Thyroid gland (tissue), 4 donors: ENCODE measurements at regions of chr18 and their contacts with region 1.

Region 1: DNA sequence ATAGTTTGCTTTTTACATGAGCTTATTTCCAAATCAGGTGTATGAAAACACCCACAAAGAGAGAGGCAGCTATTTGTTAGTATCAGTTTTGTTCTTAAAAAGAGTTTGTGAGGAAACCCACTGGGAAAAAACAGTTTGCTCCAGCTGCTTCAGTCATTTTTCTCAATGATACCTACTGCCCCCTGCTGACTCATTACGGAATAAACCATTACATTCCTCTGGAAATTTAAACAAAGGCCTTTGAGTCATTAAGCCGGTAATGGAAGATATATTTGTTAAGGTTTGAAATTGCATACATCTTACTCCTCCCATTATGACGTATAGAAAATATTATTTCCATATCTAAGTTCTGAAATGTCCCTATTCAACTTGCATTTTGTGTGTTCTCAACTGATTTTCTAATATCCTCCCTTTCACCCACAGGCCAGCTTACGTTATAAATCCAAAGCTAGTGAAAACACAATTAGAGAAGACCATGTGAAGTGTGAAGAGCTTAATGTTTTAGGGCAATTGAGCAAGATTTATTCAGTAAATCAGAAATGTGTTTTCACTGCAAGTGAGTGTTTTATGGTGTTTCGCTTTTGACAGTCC is 761.6 kb downstream of the DSC3 start:
- DNase-seq: no peak
- H3K4me3 ChIP-seq: no peak overlapping the region
- H3K27ac ChIP-seq: no peak overlapping the region
- H3K4me1 ChIP-seq: no peaks in the 10 kb centered on the region
- H3K27me3 ChIP-seq: no peaks in the 10 kb centered on the region
- CTCF ChIP-seq: peak; percentile 19 to 72 (median 56)
- POLR2A ChIP-seq: no peak

Region 2: DNA sequence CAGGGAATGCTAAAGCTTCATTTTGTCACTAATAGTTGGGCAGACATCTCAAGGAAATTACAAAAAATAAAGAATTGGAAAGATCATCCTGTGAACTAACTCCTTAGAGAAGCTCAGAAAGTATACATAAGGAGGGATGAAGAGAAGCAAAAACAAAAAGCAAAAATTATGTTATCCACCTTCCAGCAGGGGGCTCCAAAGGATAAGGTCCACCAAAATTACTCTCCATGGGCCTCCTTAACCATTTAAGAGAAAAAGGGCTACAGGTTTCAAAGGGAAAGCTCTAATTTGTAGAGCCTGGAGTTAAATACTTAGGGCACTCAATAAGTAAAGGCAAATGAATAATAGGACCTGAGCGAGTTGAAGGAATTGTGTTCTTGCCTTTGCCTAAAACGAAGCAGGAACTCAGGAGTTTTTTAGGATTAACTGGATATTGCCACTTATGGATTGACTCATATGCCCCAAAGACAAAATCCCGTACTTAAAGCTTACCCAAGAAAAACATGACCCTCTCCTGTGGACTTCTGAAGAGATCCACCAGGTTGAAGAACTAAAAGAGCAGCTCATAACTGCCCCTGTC is 406.4 kb before region 1 on chr18:
- intact Hi-C with region 1: loop called (anchors 5 kb)
- DNase-seq: peak in 1 of 2 donors; percentile 22
- H3K4me3 ChIP-seq: no peak overlapping the region
- H3K27ac ChIP-seq: no peak overlapping the region
- H3K4me1 ChIP-seq: no peaks in the 10 kb centered on the region
- H3K27me3 ChIP-seq: no peaks in the 10 kb centered on the region
- CTCF ChIP-seq: peak in 5 of 6 experiments; percentile 23 to 80 (median 68)
- POLR2A ChIP-seq: no peak

Region 3: DNA sequence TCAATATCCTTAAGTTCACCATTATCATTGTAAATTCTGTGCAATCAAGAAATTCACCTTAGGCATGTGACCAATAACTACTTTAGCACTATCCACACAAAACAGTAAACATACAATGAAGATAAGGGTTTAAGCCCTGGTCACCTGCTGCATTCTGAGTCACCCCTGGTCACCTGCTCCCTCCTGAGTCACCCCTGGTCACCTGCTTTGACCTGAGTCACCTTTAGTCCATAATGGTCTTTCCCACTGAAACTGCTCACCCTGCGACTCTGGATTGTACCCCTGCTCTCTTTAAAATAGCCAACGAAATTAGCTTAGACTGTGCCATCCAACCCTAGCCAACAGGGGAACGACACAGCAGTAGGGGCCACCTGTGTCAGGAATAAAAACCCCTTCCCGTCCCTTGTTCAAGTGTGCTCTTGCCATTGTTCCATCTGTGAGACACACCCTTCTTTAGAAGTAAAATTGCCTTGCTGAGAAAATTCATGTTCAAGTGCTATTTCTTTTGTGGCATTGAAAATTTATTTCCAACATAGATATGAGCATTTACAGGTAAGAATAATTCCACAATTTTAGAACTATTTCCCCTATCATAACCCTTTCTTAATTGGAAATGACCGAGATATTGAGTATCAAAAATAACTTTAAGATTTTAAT is 141.2 kb before region 1 on chr18:
- intact Hi-C with region 1: no loop called
- DNase-seq: no peak
- H3K4me3 ChIP-seq: no peak overlapping the region
- H3K27ac ChIP-seq: no peak overlapping the region
- H3K4me1 ChIP-seq: no peaks in the 10 kb centered on the region
- H3K27me3 ChIP-seq: no peaks in the 10 kb centered on the region
- CTCF ChIP-seq: no peak
- POLR2A ChIP-seq: no peak